Right ventricle myocardium superior (tissue), 1 donor: ENCODE measurements at regions of chr4 and their contacts with region 1.

Region 1: DNA sequence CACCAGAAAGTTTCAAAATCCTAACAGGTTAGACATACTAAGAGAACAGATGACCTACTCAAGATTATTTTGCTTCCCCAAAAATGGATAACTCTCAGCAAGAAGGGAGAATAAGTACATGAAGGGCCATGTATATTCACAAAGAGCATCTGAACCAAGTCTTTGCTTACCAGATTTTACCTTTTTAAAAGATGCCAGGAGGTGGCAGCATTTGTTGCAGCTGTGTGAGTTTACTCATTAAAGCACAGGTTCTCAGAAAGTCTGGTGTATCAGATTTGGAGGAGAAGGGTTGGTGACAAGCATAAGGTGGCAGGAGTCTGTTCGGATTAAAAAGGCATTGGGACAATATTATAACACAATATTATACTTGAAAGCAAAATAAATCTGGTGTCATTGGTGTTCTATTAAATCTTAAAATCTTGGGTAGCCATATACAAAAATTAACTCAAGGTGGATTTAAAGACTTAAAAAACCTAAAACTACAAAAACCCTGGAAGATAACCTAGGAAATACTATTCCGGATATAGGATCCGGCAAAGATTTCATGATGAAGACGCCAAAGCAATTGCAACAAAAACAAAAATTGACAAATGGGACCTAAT is 51.3 kb upstream of the NFKB1 start:
- DNase-seq: no peak
- ATAC-seq: peak; percentile 71

Region 2: GRCh38 chr4:102104278-102104677 is 345.6 kb before region 1 on chr4:
- intact Hi-C with region 1: no loop called
- DNase-seq: no peak
- ATAC-seq: no peak

Region 3: GRCh38 chr4:102399021-102399420 is 50.8 kb before region 1 on chr4:
- intact Hi-C with region 1: no loop called
- DNase-seq: no peak
- ATAC-seq: no peak

Region 4: GRCh38 chr4:102511830-102512605 is 62.2 kb after region 1 on chr4:
- intact Hi-C with region 1: no loop called
- DNase-seq: no peak
- ATAC-seq: no peak

Region 5: GRCh38 chr4:102620697-102621497 is 171.0 kb after region 1 on chr4:
- intact Hi-C with region 1: loop called (anchors 10 kb)
- DNase-seq: no peak
- ATAC-seq: peak; percentile 96

Region 6: GRCh38 chr4:103008875-103009729 is 559.2 kb after region 1 on chr4:
- intact Hi-C with region 1: loop called (anchors 5 kb)
- DNase-seq: no peak
- ATAC-seq: peak; percentile 82

Region 7: DNA sequence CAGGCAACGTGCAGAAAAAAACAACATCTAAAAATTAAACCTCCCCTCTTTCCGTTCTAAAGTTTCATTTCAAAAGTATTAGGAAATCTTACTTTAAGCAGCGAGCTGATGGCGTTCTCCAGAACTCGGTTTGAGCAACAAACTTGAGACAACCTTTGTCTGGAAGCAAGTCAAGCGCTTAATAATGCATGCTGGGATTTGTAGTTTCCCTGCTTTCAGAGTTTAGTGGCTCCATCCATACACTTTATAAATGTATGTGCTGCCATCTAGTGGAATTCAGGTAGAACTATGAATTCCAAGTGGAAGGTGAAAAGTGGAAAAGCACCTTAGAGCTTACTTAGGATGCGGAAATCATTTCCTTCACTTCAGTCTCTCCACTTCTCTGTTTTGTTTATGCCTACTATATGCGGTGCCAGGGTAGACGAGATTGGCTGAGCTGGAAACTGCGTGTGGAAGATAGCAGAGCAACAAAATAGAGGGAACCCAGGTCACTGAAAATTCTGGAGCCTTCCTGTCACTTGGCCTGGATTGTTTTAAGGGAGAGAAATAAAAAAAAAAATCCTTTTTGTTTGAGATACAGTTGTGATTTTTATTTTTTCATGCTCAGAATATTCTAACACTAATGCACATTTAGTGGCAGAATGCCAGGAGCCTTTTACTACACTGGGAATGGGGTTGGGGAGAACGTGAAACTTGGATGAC is 650.0 kb after region 1 on chr4 and contains the start of gene BDH2:
- intact Hi-C with region 1: loop called (anchors 5 kb)
- DNase-seq: no peak
- ATAC-seq: peak; percentile 98
- total RNA-seq, gene BDH2: 20.1 TPM